T-cell (primary cell): ENCODE measurements at regions of chr10 and their contacts with region 1.

Region 1: GRCh38 chr10:114073395-114074186 is 29.9 kb downstream of the ADRB1 start:
- DNase-seq: peak in 25 of 35 experiments; percentile 5 to 46 (median 21)
- ATAC-seq: peak; percentile 71 to 90 (median 80)
- H3K4me3 ChIP-seq: peak overlapping the region in 1 of 2 donors; percentile 51
- H3K4me3 Mint-ChIP-seq: peak overlapping the region in 1 of 3 donors; percentile 2
- H3K27ac ChIP-seq: no peak overlapping the region
- H3K27ac Mint-ChIP-seq: no peak overlapping the region
- H3K4me1 ChIP-seq: peaks cover 10 to 12% of the 10 kb centered on the region in 2 experiments
- H3K4me1 Mint-ChIP-seq: peaks cover 17 to 27% (median 17%) of the 10 kb centered on the region in 3 donors
- H3K27me3 ChIP-seq: no peaks in the 10 kb centered on the region
- H3K27me3 Mint-ChIP-seq: no peaks in the 10 kb centered on the region

Region 2: GRCh38 chr10:113780681-113781250 is 292.8 kb before region 1 on chr10:
- CTCF ChIA-PET with region 1: no interaction called
- POLR2A ChIA-PET with region 1: interaction called in 1 of 2 experiments, 10 read pairs
- DNase-seq: no peak
- ATAC-seq: no peak
- H3K4me3 ChIP-seq: no peak overlapping the region
- H3K4me3 Mint-ChIP-seq: no peak overlapping the region
- H3K27ac ChIP-seq: no peak overlapping the region
- H3K27ac Mint-ChIP-seq: no peak overlapping the region
- H3K4me1 ChIP-seq: no peaks in the 10 kb centered on the region
- H3K4me1 Mint-ChIP-seq: no peaks in the 10 kb centered on the region
- H3K27me3 ChIP-seq: peaks cover 0 to 7% of the 10 kb centered on the region in 2 experiments
- H3K27me3 Mint-ChIP-seq: peaks cover 6 to 12% of the 10 kb centered on the region in 2 donors